ENCODE measurements at regions of chr11 and their contacts with region 1.

Region 1: GRCh38 chr11:73177778-73178577 is 35.9 kb upstream of the FCHSD2 start:
- DNase-seq: peak; percentile 67
- H3K4me3 Mint-ChIP-seq: no peak overlapping the region
- H3K27ac Mint-ChIP-seq: no peak overlapping the region
- H3K4me1 Mint-ChIP-seq: peaks cover 13% of the 10 kb centered on the region
- H3K27me3 Mint-ChIP-seq: peaks cover 16% of the 10 kb centered on the region

Region 2: DNA sequence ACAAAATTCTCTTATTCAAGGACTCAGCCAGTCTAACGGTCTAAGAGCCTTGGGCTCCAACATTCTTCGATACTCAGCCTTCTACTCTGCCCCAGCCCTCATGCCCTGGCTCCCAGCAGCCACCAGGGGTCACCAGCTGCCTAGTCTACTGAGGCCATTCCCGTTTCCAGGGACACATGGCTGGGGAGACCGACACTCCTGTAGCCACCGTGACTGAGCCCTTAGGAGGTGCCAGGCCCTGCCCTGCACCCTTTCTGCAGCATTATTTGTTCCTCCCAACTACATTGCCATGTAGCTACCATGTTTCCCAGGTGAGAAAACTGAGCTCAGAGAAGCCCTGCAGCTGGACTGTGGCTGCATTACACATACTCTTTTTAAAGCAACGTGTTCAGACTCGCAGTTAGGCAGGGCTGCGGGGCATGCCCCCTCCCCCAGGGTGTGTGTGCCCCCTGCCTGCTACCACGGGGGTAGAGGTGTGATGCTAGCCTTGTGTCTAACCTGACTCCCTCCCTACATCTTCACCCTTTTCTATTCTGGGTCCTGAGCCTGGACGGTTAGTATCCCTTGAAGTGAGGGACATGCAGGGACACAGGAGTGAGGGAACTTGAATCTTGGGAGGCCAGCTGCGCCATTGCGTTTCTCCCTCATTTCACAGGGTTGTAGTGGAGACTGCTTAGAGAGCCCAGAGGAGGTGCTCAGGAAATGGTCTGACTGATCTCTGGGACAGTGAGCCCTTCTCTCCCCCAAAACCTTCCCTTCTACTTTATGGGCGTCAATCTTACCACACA is 346.3 kb before region 1 on chr11:
- intact Hi-C with region 1: loop called (anchors 1 kb)
- DNase-seq: no peak
- H3K4me3 Mint-ChIP-seq: no peak overlapping the region
- H3K27ac Mint-ChIP-seq: no peak overlapping the region
- H3K4me1 Mint-ChIP-seq: peaks cover 14% of the 10 kb centered on the region
- H3K27me3 Mint-ChIP-seq: no peaks in the 10 kb centered on the region

Region 3: DNA sequence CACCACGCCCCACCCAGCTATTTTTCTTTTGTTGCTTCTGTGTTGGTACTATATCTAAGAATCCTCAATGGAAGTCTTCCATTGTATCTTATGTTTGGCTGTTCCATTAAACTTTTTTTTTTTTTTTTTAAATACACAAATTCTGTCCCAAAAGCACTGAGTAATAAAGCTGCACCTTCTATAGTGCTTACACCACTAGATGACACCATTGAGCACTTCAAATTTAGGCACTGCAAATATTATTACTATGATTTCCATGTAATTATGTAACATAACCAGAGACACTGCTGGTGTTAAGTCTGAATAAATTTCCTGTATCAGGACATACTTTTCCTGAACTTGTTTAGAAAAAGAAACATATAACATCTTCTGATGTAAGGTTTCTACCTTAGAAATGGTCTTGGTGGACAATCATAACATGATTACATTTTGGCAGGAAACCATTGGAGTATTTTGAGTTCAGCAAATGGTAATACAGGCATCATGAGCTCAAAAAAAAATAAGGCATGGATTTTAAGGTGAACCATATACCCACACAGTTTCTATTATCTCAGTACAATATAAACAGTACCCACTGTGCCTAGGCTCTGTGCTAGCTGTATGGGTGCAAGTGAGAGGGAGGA is 253.3 kb before region 1 on chr11:
- intact Hi-C with region 1: loop called (anchors 2 kb)
- DNase-seq: no peak
- H3K4me3 Mint-ChIP-seq: no peak overlapping the region
- H3K27ac Mint-ChIP-seq: no peak overlapping the region
- H3K4me1 Mint-ChIP-seq: no peaks in the 10 kb centered on the region
- H3K27me3 Mint-ChIP-seq: no peaks in the 10 kb centered on the region